RWPE1 (cell line): ENCODE measurements at regions of chr3 and their contacts with region 1.

Region 1: GRCh38 chr3:183274609-183275008 is 21.6 kb downstream of the B3GNT5 start:
- DNase-seq: peak; percentile 76
- H3K27ac ChIP-seq: no peak overlapping the region
- CTCF ChIP-seq: no peak

Region 2: GRCh38 chr3:183098538-183099025 is 176.0 kb before region 1 on chr3:
- CTCF ChIA-PET with region 1: interaction called, 10 read pairs
- POLR2A ChIA-PET with region 1: no interaction called
- DNase-seq: no peak
- H3K27ac ChIP-seq: peak overlapping the region; percentile 77
- CTCF ChIP-seq: no peak

Region 3: DNA sequence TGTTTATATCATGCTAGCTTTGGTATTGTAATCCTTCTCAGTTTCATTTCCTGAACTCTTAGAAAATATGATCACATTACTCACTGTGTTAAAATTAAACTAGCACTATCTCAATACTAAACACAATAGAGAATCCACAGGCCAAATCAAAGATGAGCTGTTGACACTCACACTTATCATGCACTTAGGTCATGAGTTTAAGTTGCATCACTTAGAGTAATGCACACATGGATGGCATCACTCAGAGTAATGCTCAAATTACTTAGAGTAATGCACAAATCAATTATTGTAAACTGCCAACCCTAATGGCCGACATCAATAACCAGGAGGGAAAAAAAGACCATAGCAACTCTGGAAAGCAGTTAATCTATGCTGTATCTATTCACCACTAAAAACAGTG is 193.8 kb after region 1 on chr3:
- CTCF ChIA-PET with region 1: no interaction called
- POLR2A ChIA-PET with region 1: no interaction called
- DNase-seq: no peak
- H3K27ac ChIP-seq: no peak overlapping the region
- CTCF ChIP-seq: no peak